ENCODE measurements at regions of chr18 and their contacts with region 1.

Region 1: DNA sequence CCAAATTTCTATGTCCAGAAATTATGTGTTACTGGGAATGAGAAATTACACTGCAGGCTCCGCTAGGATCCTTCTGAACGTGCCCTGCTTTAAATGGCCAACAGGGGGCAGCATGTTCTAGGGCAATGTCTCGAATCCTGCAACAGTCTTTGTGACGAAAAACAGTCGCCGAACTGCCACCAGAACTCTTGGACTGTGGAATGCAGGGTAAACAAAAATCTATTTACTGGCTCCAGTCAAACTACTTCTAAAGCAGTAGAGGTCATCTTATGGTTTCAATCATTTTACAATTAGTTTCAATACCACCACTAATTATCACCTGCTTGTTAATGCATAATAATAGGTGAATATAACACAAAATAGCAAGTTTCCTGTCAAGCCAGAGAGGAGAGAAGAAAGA is 9.8 kb upstream of the ZNF397 start:
- DNase-seq: peak; percentile 46
- H3K4me3 ChIP-seq: no peak overlapping the region
- H3K27ac ChIP-seq: no peak overlapping the region
- H3K4me1 ChIP-seq: no peaks in the 10 kb centered on the region
- H3K27me3 ChIP-seq: no peaks in the 10 kb centered on the region
- CTCF ChIP-seq: peak; percentile 91 to 98

Region 2: GRCh38 chr18:35267161-35267651 is 36.2 kb after region 1 on chr18:
- CTCF ChIA-PET with region 1: no interaction called
- dilution Hi-C with region 1: no loop called
- in situ Hi-C with region 1: no loop called
- intact Hi-C with region 1: no loop called
- DNase-seq: no peak
- H3K4me3 ChIP-seq: peak overlapping the region; percentile 29 to 36 (median 35)
- H3K27ac ChIP-seq: no peak overlapping the region
- H3K4me1 ChIP-seq: peaks cover 4% of the 10 kb centered on the region
- H3K27me3 ChIP-seq: no peaks in the 10 kb centered on the region
- CTCF ChIP-seq: no peak

Region 3: GRCh38 chr18:35290073-35290735 is 59.2 kb after region 1 on chr18 and contains the start of gene ZSCAN30:
- CTCF ChIA-PET with region 1: no interaction called
- dilution Hi-C with region 1: no loop called
- in situ Hi-C with region 1: no loop called
- intact Hi-C with region 1: no loop called
- DNase-seq: peak; percentile 95
- H3K4me3 ChIP-seq: peak within 1 kb of the TSS; percentile 59 to 92 (median 73)
- H3K27ac ChIP-seq: peak within 1 kb of the TSS; percentile 71
- H3K4me1 ChIP-seq: peaks cover 8% of the 10 kb centered on the region
- H3K27me3 ChIP-seq: no peaks in the 10 kb centered on the region
- CTCF ChIP-seq: no peak
- total RNA-seq, gene ZSCAN30: 15.4 to 17.3 TPM

Region 4: DNA sequence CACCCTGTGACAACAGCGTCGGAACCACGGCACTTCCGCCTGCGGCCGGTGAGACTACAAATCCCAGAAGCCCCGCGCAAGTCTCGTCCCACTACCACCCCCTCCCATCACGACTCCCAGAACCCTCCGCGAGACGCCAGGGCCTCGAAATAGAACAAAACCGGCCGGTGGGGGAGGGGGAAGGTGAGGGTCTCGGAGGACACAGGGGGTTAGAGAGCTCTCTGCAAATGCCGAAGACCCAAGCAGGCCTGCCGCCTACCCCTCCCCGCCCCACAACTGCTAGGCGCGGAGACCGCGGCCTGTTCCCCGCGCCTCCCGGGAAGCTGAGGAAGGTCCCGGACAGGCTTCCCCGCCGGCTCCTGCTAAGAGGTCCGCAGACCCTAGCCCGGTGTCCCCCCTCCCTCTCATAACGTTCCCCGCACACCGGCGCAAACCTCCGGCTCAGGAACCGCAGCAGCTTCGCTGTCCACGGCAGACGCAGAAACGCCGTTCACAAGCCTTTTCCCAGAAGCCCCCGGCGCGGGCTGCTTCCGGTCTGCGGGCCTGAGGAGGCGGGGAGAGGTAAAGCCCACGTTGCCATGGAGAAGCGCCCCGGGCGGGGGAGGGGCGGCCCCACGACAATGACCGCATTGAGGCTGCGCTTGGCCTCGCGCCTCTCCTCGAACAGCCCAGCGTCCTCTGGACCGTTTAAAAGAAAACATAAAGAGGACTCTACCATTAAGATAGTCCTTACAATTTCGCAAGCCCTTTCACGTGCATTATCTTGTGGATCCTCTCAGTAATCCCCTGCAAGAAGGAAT is 113.1 kb after region 1 on chr18 and contains the start of gene ZNF24:
- CTCF ChIA-PET with region 1: no interaction called
- dilution Hi-C with region 1: no loop called
- in situ Hi-C with region 1: loop called (anchors 5 kb)
- intact Hi-C with region 1: no loop called
- DNase-seq: peak; percentile 87
- H3K4me3 ChIP-seq: peak within 1 kb of the TSS; percentile 76 to 92 (median 76)
- H3K27ac ChIP-seq: peak within 1 kb of the TSS; percentile 90
- H3K4me1 ChIP-seq: peaks cover 7% of the 10 kb centered on the region
- H3K27me3 ChIP-seq: no peaks in the 10 kb centered on the region
- CTCF ChIP-seq: no peak
- total RNA-seq, gene ZNF24: 32.8 to 36.3 TPM

Region 5: DNA sequence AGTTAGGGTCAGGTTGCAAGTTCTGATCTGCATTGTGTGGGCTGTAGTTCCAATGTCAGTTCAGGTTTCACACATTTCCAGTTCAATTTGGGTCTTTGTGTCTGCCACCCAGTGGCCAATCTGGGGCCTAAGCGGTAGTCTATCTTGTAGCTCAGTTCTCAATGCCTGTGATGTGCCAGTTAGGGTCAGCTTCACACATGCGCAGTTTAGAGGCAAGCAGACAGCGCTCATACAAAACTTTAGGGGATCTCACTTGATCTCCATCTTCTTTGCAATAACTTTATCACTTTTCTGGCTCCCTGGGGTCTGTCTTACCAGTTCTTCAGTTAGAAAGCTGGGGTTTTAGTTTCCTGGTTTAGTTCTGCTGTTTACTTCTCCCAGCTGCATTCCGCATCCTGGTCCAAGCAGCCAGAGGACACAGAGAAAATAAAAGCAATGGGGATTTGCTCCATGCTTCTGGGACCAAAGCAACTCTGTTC is 124.1 kb after region 1 on chr18:
- CTCF ChIA-PET with region 1: no interaction called
- dilution Hi-C with region 1: no loop called
- in situ Hi-C with region 1: no loop called
- intact Hi-C with region 1: loop called (anchors 1 kb)
- DNase-seq: peak; percentile 68
- H3K4me3 ChIP-seq: no peak overlapping the region
- H3K27ac ChIP-seq: no peak overlapping the region
- H3K4me1 ChIP-seq: no peaks in the 10 kb centered on the region
- H3K27me3 ChIP-seq: no peaks in the 10 kb centered on the region
- CTCF ChIP-seq: peak; percentile 71 to 80

Region 6: DNA sequence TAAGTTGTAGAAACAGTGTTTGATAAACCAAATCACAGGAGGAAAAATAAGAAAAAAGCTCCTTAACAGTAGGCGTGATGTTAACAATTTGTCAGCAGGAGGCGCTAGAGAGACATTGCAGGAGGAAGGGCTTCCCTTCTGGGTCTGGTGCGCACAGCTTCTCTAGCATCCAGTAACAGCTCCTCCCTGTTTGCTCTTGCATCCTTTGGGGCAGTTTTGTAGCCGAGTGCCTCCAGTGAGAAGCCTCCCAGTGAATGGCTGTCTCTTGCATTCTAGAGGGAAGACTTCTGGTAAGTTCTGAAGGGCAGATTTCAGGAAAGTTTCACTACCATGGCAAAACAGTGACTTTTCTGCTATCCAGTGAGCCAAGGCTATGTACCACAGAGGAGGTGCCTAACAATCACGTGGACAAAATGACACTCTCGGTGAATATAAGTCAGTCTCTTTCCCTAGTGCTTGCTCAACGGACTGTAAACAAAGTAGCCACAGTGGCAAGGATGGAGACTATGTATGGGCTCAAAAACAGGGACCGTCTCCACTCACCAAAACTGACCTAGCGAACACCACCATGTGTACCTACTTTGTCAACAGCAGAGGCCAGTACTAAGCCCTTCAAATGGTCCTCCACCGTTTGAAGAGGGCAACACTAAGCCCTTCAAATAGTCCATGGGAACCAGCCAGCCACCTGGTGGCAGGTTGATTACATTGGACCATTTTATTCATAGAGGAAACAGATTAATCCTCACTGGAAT is 155.7 kb after region 1 on chr18:
- CTCF ChIA-PET with region 1: interaction called, 5 read pairs
- dilution Hi-C with region 1: no loop called
- in situ Hi-C with region 1: no loop called
- intact Hi-C with region 1: loop called (anchors 1 kb)
- DNase-seq: peak; percentile 61
- H3K4me3 ChIP-seq: no peak overlapping the region
- H3K27ac ChIP-seq: no peak overlapping the region
- H3K4me1 ChIP-seq: no peaks in the 10 kb centered on the region
- H3K27me3 ChIP-seq: no peaks in the 10 kb centered on the region
- CTCF ChIP-seq: peak; percentile 92 to 96

Region 7: DNA sequence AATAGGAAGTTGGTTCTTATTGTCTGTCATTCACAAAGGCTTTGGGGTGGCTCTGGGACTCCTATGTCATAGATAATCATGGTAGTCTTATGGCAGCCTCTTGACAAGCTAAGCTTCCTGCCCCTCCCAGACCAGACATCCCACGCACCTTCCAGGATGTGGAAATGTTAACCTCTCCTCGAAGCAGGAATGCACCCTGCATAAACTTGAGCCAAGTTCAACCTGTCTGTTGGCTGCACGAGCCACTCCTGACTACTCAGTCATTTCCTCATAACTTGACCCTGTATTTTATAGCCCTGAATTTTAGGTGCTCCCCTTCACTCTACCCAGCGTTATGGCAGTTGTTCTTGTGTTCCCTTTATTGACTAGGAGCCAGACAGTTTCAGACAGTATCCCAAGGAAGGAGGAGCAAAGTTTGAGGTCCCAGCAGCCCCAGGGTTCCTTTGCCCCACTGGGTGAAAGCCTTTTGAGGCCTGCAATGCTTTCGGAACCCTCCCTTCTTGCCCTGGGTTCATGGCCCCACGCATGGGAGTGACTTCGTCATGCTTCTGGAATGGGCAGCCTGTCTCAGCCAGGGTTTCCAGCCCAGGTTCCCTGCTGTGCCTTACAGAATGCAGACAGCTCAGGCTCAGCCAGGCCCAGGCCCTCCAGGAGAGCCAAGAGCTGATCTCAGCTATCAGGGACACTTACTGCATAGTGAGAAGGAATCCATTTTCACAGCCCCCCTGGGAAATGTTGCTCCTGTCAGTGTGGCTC is 282.3 kb after region 1 on chr18:
- CTCF ChIA-PET with region 1: no interaction called
- dilution Hi-C with region 1: no loop called
- in situ Hi-C with region 1: no loop called
- intact Hi-C with region 1: loop called (anchors 10 kb)
- DNase-seq: peak; percentile 61
- H3K4me3 ChIP-seq: no peak overlapping the region
- H3K27ac ChIP-seq: peak overlapping the region; percentile 9
- H3K4me1 ChIP-seq: peaks cover 38% of the 10 kb centered on the region
- H3K27me3 ChIP-seq: no peaks in the 10 kb centered on the region
- CTCF ChIP-seq: no peak